PC-3 (cell line): ENCODE measurements at regions of chr1 and their contacts with region 1.

Region 1: GRCh38 chr1:106755682-106756406 is 300.6 kb upstream of the PRMT6 start:
- DNase-seq: peak; percentile 98
- ATAC-seq: peak; percentile 84
- H3K4me3 ChIP-seq: peak overlapping the region; percentile 17; the same call in 1 of the 2 replicates
- H3K27ac ChIP-seq: peak overlapping the region; percentile 88
- H3K4me1 ChIP-seq: peaks cover 27% of the 10 kb centered on the region
- H3K27me3 ChIP-seq: no peaks in the 10 kb centered on the region
- CTCF ChIP-seq: no peak

Region 2: DNA sequence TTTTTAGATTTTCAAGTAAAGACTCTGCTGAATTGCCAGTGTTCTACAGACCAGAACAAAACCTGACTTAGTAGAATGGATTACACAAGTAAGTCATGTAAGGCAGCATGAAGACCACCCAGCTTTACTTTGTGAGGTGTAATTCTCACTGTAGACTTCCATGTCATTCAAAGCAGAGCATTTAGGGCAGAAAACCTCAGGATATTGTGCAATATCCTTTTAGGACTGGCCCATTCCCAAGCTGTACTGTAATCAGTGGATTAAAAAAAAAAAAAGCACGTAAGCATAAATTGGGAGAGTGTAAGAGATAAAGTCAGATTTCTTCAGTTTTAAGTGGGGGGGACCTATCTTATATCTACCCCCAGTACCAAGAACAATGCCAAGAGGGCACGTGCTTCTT is 79.8 kb before region 1 on chr1:
- CTCF ChIA-PET with region 1: no interaction called
- POLR2A ChIA-PET with region 1: no interaction called
- intact Hi-C with region 1: loop called (anchors 5 kb)
- DNase-seq: peak; percentile 80
- ATAC-seq: no peak
- H3K4me3 ChIP-seq: no peak overlapping the region
- H3K27ac ChIP-seq: peak overlapping the region; percentile 66
- H3K4me1 ChIP-seq: peaks cover 52% of the 10 kb centered on the region
- H3K27me3 ChIP-seq: no peaks in the 10 kb centered on the region
- CTCF ChIP-seq: no peak